Prostate gland (tissue), 2 donors: ENCODE measurements at regions of chr6 and their contacts with region 1.

Region 1: DNA sequence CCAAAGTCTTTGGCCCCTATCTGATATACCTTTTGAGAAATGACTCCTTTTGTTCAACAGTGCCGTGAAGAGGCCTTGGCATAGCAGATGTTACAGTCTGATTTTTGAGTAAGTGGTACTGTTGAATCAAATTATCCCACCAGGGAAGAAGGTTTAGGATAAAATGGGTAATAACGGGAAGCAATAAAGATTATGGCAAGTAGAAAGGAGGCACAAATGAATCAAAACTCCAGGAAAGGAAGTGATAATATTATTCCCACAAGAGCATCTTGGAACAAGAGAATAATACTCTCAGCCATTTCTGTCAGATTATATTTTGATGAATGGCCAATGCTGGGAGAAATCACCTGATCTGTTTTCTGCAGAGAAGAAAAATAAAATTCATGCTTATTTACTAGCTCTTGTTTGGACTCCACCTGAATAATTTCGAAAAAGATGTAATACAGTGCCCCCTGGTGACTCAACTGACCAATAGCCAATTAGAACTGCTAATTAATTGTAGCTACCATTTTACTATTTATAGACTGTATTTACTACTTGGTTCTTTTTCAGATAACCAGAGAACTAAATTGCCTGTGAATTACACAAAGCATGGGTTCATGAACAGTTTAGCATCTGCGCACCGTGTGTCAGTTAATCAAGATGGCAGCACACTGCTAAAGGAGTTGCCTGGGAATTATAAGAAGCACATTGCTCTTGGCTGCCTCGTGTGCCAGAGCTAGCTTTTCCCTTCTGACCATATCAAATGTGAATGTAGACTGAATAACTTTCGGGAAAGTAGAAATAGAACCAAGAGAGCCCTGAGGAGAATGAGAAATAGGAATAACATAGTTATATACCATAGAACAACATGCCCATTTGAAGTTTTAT is 78.5 kb upstream of the TRDN start:
- DNase-seq: peak; percentile 6
- H3K4me3 ChIP-seq: no peak overlapping the region
- H3K27ac ChIP-seq: no peak overlapping the region
- H3K4me1 ChIP-seq: no peaks in the 10 kb centered on the region
- H3K27me3 ChIP-seq: no peaks in the 10 kb centered on the region
- CTCF ChIP-seq: peak in 3 of 4 experiments; percentile 43 to 52 (median 44)
- POLR2A ChIP-seq: no peak

Region 2: GRCh38 chr6:123415844-123416468 is 299.3 kb before region 1 on chr6:
- intact Hi-C with region 1: loop called (anchors 5 kb)
- DNase-seq: peak; percentile 36
- H3K4me3 ChIP-seq: no peak overlapping the region
- H3K27ac ChIP-seq: no peak overlapping the region
- H3K4me1 ChIP-seq: no peaks in the 10 kb centered on the region
- H3K27me3 ChIP-seq: no peaks in the 10 kb centered on the region
- CTCF ChIP-seq: peak; percentile 47 to 74 (median 54)
- POLR2A ChIP-seq: no peak

Region 3: GRCh38 chr6:123745895-123746294 is 30.7 kb after region 1 on chr6:
- intact Hi-C with region 1: no loop called
- DNase-seq: no peak
- H3K4me3 ChIP-seq: no peak overlapping the region
- H3K27ac ChIP-seq: no peak overlapping the region
- H3K4me1 ChIP-seq: no peaks in the 10 kb centered on the region
- H3K27me3 ChIP-seq: no peaks in the 10 kb centered on the region
- CTCF ChIP-seq: no peak
- POLR2A ChIP-seq: no peak

Region 4: GRCh38 chr6:123794190-123794589 is 78.9 kb after region 1 on chr6:
- intact Hi-C with region 1: no loop called
- DNase-seq: no peak
- H3K4me3 ChIP-seq: no peak overlapping the region
- H3K27ac ChIP-seq: no peak overlapping the region
- H3K4me1 ChIP-seq: no peaks in the 10 kb centered on the region
- H3K27me3 ChIP-seq: no peaks in the 10 kb centered on the region
- CTCF ChIP-seq: no peak
- POLR2A ChIP-seq: no peak